Mucosa of descending colon (tissue), 3 donors: ENCODE measurements at regions of chr1 and their contacts with region 1.

Region 1: DNA sequence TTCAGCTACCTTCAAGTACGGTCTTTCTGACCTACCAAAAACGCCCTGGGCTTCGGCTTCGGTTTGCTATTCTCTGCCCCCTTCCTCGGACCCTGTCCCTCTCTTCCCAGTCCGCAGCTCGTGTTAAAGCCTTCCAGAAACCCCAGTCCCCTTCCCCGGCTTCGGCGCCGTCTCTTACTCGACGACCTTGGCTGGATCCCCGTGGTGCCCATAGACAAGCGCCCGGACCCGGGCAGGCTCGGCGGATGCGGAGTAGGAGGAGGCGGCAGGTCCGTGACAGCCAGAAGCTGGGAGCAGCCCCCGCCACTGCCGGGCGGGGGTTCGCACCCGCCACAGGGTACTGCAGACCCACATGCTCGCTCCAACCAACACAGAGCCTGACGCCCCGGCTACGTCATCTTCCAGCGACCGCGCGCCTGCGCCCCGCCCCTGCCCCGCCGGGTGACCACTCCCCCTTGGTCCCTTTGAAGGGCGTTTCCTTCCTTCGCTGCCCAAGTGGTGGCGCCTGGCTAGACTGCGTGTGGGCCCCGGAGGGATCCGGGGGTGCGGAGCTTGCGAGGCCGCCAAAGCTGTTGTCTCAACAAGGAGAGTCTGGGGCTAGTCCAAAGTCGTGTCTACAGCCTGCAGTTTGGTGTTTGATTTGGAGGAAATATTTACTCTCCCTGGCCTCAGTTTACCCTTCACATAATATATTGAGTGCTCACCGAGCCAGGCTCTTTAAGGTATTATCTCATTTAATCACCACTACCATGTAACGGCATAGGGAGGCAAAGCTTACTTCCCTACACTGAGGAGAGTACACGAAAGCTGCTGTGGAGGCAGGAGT is at the start of gene MECR:
- DNase-seq: peak; percentile 94 to 97 (median 96)
- ATAC-seq: peak; percentile 100
- H3K4me3 ChIP-seq: peak within 1 kb of the TSS; percentile 45
- H3K4me1 ChIP-seq: peaks cover 8% of the 10 kb centered on the region
- CTCF ChIP-seq: no peak
- total RNA-seq, gene MECR: 18.3 to 20.8 (median 19.5) TPM

Region 2: GRCh38 chr1:29083317-29084195 is 147.2 kb before region 1 on chr1:
- intact Hi-C with region 1: no loop called
- DNase-seq: no peak
- ATAC-seq: no peak
- H3K4me3 ChIP-seq: no peak overlapping the region
- H3K4me1 ChIP-seq: no peaks in the 10 kb centered on the region
- CTCF ChIP-seq: no peak

Region 3: GRCh38 chr1:29120961-29121485 is 109.7 kb before region 1 on chr1:
- intact Hi-C with region 1: no loop called
- DNase-seq: peak; percentile 66 to 75 (median 67)
- ATAC-seq: peak; percentile 69
- H3K4me3 ChIP-seq: no peak overlapping the region
- H3K4me1 ChIP-seq: peaks cover 34% of the 10 kb centered on the region
- CTCF ChIP-seq: peak; percentile 45

Region 4: DNA sequence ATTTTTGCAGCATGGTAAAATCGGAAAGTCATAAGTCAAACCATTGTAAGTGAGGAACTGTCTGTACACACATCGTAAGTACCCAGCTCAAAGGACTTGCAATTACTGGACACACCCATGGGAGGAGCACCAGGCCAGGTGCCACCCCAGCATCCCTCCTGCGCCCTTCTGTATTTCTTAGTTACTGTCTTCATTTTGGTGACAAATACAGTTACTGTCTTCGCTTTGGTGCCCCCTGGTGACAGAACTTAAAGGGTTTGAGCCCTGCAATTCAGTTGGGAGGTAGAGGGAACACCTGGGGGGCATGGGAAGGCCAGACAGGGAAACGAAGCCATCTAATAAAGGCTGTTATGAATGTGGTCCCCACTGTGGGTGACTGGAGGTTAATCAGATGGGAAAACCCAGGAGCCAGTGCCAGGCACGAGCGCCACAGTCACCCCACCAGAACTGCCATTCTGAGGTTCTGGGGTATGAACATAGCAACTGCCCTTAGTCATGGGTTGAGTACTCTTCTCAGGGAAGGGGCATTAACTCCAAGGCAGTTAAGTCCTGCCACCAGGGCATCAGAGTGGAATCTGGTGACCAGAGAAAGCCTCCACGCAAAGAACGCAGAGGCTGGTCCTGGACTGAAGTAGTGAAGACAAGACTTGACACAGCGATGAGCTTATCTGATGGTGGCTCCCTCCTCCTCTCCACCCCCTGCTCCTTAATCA is 618.4 kb after region 1 on chr1:
- intact Hi-C with region 1: loop called in 1 of 2 experiments (anchors 10 kb)
- DNase-seq: peak in 2 of 3 donors; percentile 32 to 73
- ATAC-seq: peak; percentile 54
- H3K4me3 ChIP-seq: no peak overlapping the region
- H3K4me1 ChIP-seq: no peaks in the 10 kb centered on the region
- CTCF ChIP-seq: peak; percentile 19

Region 5: DNA sequence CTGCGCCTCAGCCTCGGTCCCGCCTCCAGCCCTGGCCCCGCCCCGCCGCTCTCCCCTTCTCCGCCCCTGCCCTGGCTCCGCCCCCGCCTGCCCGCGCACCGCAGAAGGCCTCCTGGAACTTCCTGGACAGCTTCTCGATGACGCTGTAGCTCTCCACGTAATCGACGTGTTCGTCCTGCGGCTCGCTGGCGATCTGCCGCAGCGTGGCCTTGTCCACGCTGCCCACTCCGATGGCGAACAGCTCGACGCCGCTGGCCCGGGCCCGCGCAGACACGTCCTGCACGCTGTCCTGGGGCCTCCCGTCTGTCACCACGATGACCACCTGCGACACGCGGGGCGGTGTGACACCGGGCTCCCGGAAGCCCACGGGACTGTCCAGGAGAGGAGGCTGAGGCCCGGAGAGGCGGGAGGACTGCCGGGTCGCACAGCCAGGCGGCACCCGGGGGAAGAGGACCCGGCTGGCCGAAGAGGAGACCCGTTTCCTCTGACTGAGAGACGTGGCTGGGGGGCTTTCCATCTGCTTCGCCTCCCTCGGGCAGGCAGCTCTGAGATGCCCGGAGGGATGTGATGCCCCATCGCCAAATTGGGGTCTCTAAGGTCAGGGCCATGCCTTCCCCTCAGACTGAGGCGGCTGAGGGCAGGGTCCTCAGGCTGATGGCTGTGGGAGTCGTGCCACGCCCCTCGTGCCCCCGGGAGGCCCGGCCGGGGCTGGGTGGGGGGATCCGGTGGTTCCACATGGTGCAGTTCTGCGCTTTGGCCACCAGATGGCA is 1488.1 kb after region 1 on chr1:
- intact Hi-C with region 1: loop called in 1 of 2 experiments (anchors 10 kb)
- DNase-seq: peak; percentile 78 to 91 (median 90)
- ATAC-seq: peak; percentile 85
- H3K4me3 ChIP-seq: peak overlapping the region; percentile 19
- H3K4me1 ChIP-seq: peaks cover 13% of the 10 kb centered on the region
- CTCF ChIP-seq: peak; percentile 90